ENCODE measurements at regions of chr7 and their contacts with region 1.

Region 1: DNA sequence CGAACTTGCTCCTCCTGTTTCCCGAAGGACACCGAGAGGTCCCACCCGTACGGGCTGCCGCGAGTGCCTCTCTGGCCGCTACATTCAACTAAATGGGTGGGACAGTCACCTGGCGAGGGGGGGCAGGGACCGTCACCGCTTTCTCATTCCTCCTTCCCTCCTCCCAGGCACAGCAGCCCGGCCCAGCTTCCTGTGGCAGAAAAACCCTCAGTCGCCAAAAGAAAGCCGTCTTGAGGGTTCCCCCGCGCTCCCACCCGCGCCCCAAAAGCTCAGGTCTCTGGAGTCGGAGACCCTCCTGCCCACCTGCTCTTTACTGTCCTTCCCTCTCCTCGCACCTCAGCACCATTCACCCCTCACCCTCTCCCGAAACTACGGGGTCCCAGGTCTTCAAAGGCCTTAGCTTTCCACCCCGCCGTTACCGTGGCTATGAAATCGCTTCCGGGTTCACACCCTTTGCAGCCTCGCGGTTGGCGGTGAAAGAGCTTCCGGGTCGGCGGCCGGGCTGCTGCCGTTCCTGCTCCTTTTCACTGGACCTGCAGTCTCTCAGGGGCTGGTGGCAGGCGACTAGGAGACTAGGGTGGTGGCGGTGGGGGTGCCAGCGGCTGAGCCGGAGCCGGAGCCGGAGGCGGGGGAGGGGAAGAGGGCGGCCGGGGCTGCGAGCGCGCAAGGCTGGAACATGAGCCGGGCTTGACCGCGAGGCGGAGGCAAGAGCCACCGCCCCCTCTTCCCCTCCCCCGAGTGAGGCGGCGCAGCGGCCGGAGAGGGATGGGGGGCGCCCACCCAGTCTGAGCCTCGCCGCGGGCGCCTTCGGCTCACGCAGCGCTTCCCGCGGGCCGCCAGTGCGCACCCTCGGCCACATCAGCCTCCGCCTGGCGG is at the starts of genes ANKIB1 and KRIT1:
- DNase-seq: peak; percentile 68 to 88 (median 86)
- ATAC-seq: peak; percentile 87
- H3K4me3 ChIP-seq: peak within 1 kb of the TSS; percentile 80
- H3K4me3 Mint-ChIP-seq: peak within 1 kb of the TSS; percentile 97 to 100 (median 98)
- H3K27ac ChIP-seq: peak within 1 kb of the TSS; percentile 92
- H3K27ac Mint-ChIP-seq: peak within 1 kb of the TSS; percentile 98 to 100 (median 100)
- H3K4me1 ChIP-seq: peaks cover 15 to 22% of the 10 kb centered on the region in 2 donors
- H3K4me1 Mint-ChIP-seq: peaks cover 30 to 64% (median 45%) of the 10 kb centered on the region in 7 donors
- H3K27me3 ChIP-seq: no peaks in the 10 kb centered on the region
- H3K27me3 Mint-ChIP-seq: no peaks in the 10 kb centered on the region
- total RNA-seq, gene ANKIB1: 54.8 to 98.6 (median 68.2) TPM
- total RNA-seq, gene KRIT1: 45.7 to 78.7 (median 48.6) TPM

Region 2: DNA sequence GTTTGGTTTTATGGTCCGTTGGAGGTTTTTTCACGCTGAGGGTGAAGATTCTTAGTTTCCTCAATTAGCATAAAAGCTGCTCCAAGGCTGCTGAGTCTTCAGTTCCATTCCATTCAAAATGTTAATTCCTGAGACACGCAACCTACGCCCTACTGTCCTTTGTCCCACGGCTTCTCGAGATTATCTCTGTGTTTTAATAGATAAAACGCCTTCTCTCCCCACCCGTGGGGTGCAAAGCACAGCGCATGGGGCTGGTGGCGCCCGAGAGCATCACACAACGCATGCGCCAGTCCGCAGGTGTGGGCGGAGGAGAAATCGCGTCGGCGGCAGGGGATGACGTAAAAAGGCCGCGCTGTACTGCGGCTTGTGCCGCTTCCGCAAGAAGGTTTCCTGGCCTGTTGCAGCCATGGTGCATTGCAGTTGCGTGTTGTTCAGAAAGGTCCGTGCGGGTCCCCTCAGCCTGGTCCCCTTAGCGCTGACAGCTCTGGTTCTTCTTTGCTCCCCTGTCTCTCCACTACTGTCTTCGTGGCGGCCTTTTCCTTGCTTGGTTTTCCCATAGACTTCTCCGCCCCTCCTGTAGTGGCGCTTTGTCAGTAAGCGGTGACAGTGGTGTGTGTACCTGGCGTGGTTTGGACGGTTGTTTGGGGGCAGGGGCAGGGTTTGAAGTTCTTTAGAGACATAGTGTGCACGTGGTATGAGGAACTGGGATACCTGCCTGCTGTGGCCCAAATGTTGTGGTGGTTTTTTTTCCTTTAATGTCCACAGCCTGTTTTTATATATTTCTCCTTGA is 1899.2 kb before region 1 on chr7 and contains the start of gene GTPBP10:
- CTCF ChIA-PET with region 1: no interaction called
- POLR2A ChIA-PET with region 1: no interaction called
- intact Hi-C with region 1: loop called in 1 of 2 experiments (anchors 5 kb)
- DNase-seq: peak; percentile 88 to 96 (median 94)
- ATAC-seq: peak; percentile 99
- H3K4me3 ChIP-seq: peak within 1 kb of the TSS; percentile 83
- H3K4me3 Mint-ChIP-seq: peak within 1 kb of the TSS; percentile 93 to 99 (median 98)
- H3K27ac ChIP-seq: peak within 1 kb of the TSS; percentile 95
- H3K27ac Mint-ChIP-seq: peak within 1 kb of the TSS; percentile 96 to 100 (median 99)
- H3K4me1 ChIP-seq: peaks cover 13 to 26% of the 10 kb centered on the region in 2 donors
- H3K4me1 Mint-ChIP-seq: peaks cover 23 to 65% (median 53%) of the 10 kb centered on the region in 7 donors
- H3K27me3 ChIP-seq: no peaks in the 10 kb centered on the region
- H3K27me3 Mint-ChIP-seq: peaks cover 0 to 2% (median 0%) of the 10 kb centered on the region in 5 donors
- total RNA-seq, gene GTPBP10: 21.5 to 51.4 (median 29.8) TPM

Region 3: DNA sequence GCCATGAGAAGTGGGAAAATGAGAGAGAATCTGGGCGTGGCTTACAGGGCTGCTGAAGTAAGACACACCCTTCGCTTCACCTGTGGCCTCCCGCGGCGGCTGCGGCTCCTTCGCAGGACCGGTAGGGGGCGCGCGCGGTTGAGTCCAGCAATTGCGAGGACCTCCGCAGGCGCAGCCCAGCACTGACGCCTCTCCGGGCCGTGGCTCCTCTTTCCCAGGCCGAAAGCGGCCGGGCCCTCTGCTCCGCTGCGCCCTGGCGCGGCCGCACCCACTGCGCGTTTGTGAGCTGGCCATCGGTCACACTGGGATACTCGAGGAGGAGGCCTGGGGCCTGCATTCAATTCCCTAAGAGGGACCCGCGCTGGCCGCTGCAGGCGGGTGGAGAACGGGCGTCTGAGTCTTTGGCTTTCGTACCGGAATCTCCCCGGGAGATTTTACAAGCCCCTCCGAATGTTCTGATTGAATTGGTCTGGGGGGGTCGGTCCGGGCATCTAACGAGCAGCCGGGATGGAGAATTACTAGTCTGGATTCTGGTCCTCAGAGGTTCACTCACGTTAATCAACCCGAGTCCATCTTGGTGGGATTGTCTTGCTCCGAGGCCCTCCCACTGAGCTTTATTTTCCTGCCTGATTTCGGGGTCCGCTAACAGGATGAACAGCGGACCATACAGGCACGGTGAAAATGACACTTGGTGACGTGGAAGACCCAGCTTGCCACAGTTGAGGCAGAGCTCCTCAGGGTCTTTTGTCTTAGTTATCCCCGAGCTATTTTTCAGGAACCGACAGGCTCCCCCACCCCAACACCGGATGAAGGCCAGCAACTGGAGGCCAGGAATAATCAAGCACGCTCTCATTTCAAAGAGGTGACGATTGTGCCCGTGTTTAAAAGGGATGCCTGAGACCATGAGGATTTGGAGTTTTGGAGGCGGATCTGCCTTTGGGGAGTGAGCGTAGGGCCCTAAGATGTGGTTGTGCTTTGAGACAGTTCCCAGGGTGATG is 66.5 kb before region 1 on chr7 and contains the start of gene LRRD1:
- CTCF ChIA-PET with region 1: no interaction called
- POLR2A ChIA-PET with region 1: interaction called, 3 read pairs
- intact Hi-C with region 1: loop called (anchors 1 to 2 kb)
- DNase-seq: peak; percentile 77 to 96 (median 89)
- ATAC-seq: peak; percentile 100
- H3K4me3 ChIP-seq: peak within 1 kb of the TSS; percentile 73
- H3K4me3 Mint-ChIP-seq: peak within 1 kb of the TSS; percentile 74 to 84 (median 80)
- H3K27ac ChIP-seq: peak within 1 kb of the TSS; percentile 37
- H3K27ac Mint-ChIP-seq: peak within 1 kb of the TSS in 5 of 9 donors; percentile 25 to 63 (median 41)
- H3K4me1 ChIP-seq: peaks cover 0 to 6% of the 10 kb centered on the region in 2 donors
- H3K4me1 Mint-ChIP-seq: peaks cover 0 to 17% (median 9%) of the 10 kb centered on the region in 7 donors
- H3K27me3 ChIP-seq: no peaks in the 10 kb centered on the region
- H3K27me3 Mint-ChIP-seq: peaks cover 0 to 33% (median 4%) of the 10 kb centered on the region in 5 donors
- total RNA-seq, gene LRRD1: 0.17 to 0.22 TPM in 2 of 5 experiments, not detected in the others

Region 4: GRCh38 chr7:94004024-94004951 is 1758.6 kb after region 1 on chr7 and contains the start of gene BET1:
- CTCF ChIA-PET with region 1: no interaction called
- POLR2A ChIA-PET with region 1: no interaction called
- intact Hi-C with region 1: loop called (anchors 2 to 10 kb)
- DNase-seq: peak; percentile 87 to 96 (median 92)
- ATAC-seq: peak; percentile 98
- H3K4me3 ChIP-seq: peak within 1 kb of the TSS; percentile 75
- H3K4me3 Mint-ChIP-seq: peak within 1 kb of the TSS; percentile 88 to 100 (median 99)
- H3K27ac ChIP-seq: peak within 1 kb of the TSS; percentile 91
- H3K27ac Mint-ChIP-seq: peak within 1 kb of the TSS; percentile 95 to 100 (median 99)
- H3K4me1 ChIP-seq: peaks cover 3 to 17% of the 10 kb centered on the region in 2 donors
- H3K4me1 Mint-ChIP-seq: peaks cover 22 to 56% (median 51%) of the 10 kb centered on the region in 7 donors
- H3K27me3 ChIP-seq: no peaks in the 10 kb centered on the region
- H3K27me3 Mint-ChIP-seq: peaks cover 0 to 28% (median 11%) of the 10 kb centered on the region in 5 donors
- total RNA-seq, gene BET1: 9.9 to 37.6 (median 25.2) TPM

Measured in naive thymus-derived CD4-positive, alpha-beta T cell (primary cell).